Motor neuron (in vitro differentiated cells): ENCODE measurements at regions of chr2 and their contacts with region 1.

Region 1: GRCh38 chr2:142531377-142531776 is 346.1 kb upstream of the KYNU start:
- ATAC-seq: peak in 5 of 8 experiments; percentile 89 to 95 (median 94)
- H3K4me3 ChIP-seq: no peak overlapping the region
- H3K27ac ChIP-seq: no peak overlapping the region
- H3K4me1 ChIP-seq: peaks cover 7 to 8% of the 10 kb centered on the region in 2 donors

Region 2: DNA sequence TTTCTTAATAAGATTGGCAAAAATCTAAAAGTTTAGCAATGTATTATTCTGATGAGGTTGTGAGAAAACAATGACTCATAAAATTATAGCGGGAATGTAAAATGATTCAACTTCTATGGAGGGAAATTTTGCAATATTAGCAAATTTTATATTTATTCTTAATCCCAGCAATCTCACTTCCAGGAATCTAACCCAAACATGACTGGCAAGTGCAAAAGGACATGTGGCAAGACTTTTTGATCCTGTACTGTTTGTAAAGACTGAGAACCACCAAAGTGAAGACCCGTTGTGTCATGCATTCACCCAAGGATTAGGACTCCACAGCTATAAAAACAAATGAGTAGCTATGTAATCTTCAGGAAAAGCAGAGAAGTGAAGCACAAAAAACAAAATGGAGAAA is 111.3 kb after region 1 on chr2:
- in situ Hi-C with region 1: loop called in 1 of 9 experiments (anchors 25 kb)
- ATAC-seq: no peak
- H3K4me3 ChIP-seq: no peak overlapping the region
- H3K27ac ChIP-seq: no peak overlapping the region
- H3K4me1 ChIP-seq: no peaks in the 10 kb centered on the region